Left cardiac atrium (tissue), 4 donors: ENCODE measurements at regions of chr12 and their contacts with region 1.

Region 1: GRCh38 chr12:119115296-119115905 is 63.3 kb upstream of the HSPB8 start:
- DNase-seq: no peak
- ATAC-seq: peak in 1 of 2 donors; percentile 49

Region 2: DNA sequence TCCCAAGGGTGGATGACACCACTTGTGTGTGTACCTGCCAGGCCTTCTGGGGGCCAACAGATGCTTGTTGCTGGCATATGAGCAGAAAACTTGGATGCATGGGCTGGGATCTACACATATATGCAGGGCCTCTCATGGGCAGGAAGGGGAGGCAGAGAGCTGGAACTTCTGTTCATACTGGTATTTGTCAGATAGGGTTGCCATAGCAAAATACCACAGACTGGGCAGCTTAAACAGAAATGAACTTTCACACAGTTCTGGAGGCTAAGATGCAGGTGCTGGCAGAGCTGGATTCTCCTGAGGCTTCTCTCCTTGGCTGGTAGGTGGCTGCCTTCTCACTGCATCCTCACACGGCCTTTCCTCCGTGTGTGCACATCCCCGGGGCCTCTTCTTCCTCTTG is 617.2 kb before region 1 on chr12:
- intact Hi-C with region 1: no loop called
- DNase-seq: no peak
- ATAC-seq: peak; percentile 82 to 84

Region 3: GRCh38 chr12:119274636-119275065 is 159.2 kb after region 1 on chr12:
- intact Hi-C with region 1: loop called (anchors 2 to 10 kb)
- DNase-seq: no peak
- ATAC-seq: peak; percentile 39 to 65

Region 4: GRCh38 chr12:119412811-119413794 is 297.7 kb after region 1 on chr12:
- intact Hi-C with region 1: loop called (anchors 1 to 5 kb)
- DNase-seq: peak; percentile 61
- ATAC-seq: peak; percentile 70 to 75

Region 5: DNA sequence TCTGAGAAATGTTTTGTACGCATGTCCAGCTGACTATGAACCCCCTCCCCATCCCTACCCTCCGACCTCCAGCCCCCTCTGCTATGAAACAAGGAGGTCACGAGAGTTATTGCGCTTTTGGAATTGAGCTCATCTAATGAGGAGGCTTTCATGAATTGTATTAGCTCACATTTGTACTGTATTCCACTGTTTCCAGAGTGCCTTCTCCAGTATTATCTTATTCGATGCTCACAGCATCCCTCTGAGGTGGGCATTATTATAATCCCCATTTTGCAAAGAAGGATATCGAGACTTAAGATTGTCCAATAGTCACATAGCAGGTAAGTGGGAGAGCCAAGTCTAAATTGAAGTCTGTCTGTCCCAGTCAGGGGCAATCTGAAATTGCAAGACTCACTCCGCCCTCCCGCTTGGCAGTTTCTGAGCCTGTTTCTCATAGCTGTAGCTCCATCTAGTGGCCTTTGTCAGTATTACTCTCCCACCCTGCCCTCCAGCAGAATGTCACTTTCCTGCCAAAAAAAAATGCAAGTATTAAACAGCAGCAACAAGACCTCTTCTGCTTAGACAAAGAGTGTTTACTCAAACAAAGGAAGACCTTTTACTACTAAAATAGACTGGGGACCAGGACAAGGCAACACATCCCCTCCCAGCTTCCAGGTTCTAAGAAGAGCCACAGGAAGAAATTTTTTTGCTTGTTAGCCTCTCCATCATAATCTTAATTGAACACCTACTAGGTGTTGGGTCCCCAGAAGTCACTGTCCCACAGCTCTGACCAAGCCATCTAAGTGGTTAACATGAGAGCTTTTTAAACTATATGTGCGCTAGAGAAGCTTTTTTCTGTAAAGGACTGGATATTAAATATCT is 429.6 kb after region 1 on chr12:
- intact Hi-C with region 1: loop called in 1 of 2 experiments (anchors 10 kb)
- DNase-seq: peak; percentile 67
- ATAC-seq: peak; percentile 63 to 80